ENCODE measurements at regions of chr10 and their contacts with region 1.

Region 1: DNA sequence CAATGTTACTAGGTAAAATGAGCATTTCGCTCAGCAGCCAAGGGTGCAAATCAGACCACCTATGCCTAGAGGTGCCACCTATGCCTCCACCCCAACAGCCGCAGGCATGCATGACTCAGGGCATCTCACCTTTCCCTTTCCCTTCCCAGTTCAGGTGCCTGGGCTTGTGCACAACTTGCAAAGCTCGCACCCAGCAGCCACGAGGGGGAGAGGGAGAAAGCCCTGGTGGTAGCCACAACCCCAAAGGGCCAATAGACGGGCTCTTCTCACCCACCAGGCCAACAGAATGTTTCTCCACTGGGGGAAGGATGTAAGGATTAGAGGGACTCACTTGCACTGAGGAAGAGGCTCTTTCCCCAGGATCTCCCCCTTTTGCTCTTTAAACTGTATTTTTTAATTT is 462.3 kb upstream of the PCDH15 start:
- DNase-seq: no peak
- ATAC-seq: no peak
- H3K4me3 ChIP-seq: no peak overlapping the region
- H3K27ac ChIP-seq: no peak overlapping the region
- H3K4me1 ChIP-seq: no peaks in the 10 kb centered on the region
- H3K27me3 ChIP-seq: no peaks in the 10 kb centered on the region
- CTCF ChIP-seq: no peak
- POLR2A ChIP-seq: no peak

Region 2: DNA sequence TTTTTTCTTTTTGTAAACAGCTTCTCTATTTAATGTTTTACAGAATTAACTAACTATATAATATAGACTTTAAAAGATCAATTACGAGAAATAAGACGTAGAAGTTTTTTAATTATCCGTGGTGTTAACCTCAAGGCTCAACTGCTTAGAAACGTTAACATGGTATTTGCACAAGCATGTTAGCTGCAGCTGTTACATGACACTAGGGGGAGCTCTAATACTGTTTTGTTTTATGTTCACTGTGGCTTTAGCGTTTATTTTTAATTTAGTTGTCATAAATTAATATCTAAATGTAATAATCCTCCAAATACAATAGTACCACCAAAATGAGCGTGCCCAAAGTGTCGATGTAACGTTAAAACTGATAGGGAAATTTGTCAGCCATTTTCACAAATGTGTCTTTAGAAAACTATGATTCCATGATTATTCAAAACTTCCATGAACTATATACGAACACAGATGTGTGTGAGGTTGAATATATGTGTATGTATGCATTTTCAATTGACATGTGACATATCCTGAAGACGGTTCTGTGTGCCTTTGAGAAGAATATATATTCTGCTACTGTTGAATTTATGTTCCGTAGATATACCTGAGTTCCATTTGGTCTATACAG is 1662.0 kb before region 1 on chr10:
- intact Hi-C with region 1: loop called in 2 of 10 experiments (anchors 10 kb)
- DNase-seq: no peak
- ATAC-seq: peak in 1 of 4 donors; percentile 42
- H3K4me3 ChIP-seq: no peak overlapping the region
- H3K27ac ChIP-seq: no peak overlapping the region
- H3K4me1 ChIP-seq: no peaks in the 10 kb centered on the region
- H3K27me3 ChIP-seq: no peaks in the 10 kb centered on the region
- CTCF ChIP-seq: peak; percentile 65 to 84 (median 77)
- POLR2A ChIP-seq: no peak

Region 3: GRCh38 chr10:55104738-55105137 is 158.6 kb before region 1 on chr10:
- intact Hi-C with region 1: loop called in 2 of 10 experiments (anchors 10 kb)
- DNase-seq: no peak
- ATAC-seq: no peak
- H3K4me3 ChIP-seq: no peak overlapping the region
- H3K27ac ChIP-seq: no peak overlapping the region
- H3K4me1 ChIP-seq: no peaks in the 10 kb centered on the region
- H3K27me3 ChIP-seq: no peaks in the 10 kb centered on the region
- CTCF ChIP-seq: no peak
- POLR2A ChIP-seq: no peak

Region 4: GRCh38 chr10:55374060-55374459 is 110.7 kb after region 1 on chr10:
- intact Hi-C with region 1: no loop called
- DNase-seq: peak in 4 of 5 donors; percentile 40 to 67 (median 45)
- ATAC-seq: peak; percentile 83 to 98 (median 88)
- H3K4me3 ChIP-seq: no peak overlapping the region
- H3K27ac ChIP-seq: peak overlapping the region in 6 of 12 donors; percentile 1 to 67 (median 39)
- H3K4me1 ChIP-seq: peaks cover 0 to 10% (median 0%) of the 10 kb centered on the region in 12 donors
- H3K27me3 ChIP-seq: no peaks in the 10 kb centered on the region
- CTCF ChIP-seq: no peak
- POLR2A ChIP-seq: no peak

Region 5: DNA sequence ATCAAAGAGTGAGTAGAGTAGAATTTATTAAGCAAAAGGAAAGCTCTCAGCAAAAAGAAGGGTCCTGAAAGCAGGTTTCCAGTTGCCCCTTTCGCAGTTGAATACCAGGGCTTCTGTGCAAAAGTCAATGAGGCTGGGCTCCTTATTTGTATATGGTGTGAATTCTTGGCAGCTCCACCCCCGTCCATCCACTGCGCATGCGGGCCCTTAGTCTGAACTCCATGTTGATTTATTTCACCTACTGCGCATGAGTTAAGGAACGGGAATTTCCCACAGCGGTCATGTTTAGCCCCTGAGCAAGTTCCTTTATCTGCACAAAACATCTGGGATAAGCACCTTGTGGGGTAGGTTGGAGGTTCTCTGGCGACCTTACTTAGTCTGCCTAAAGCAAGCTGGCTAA is 772.2 kb after region 1 on chr10:
- intact Hi-C with region 1: no loop called
- DNase-seq: no peak
- ATAC-seq: no peak
- H3K4me3 ChIP-seq: no peak overlapping the region
- H3K27ac ChIP-seq: no peak overlapping the region
- H3K4me1 ChIP-seq: no peaks in the 10 kb centered on the region
- H3K27me3 ChIP-seq: no peaks in the 10 kb centered on the region
- CTCF ChIP-seq: no peak
- POLR2A ChIP-seq: no peak

Measured in heart left ventricle (tissue), 16 donors.